ENCODE measurements at regions of chr5 and their contacts with region 1.

Region 1: GRCh38 chr5:40679155-40679913 is 381 bp upstream of the PTGER4 start:
- DNase-seq: peak; percentile 82 to 96 (median 87)
- ATAC-seq: peak; percentile 83
- H3K4me3 ChIP-seq: peak overlapping the region; percentile 77
- H3K4me3 Mint-ChIP-seq: peak overlapping the region; percentile 93 to 100 (median 98)
- H3K27ac ChIP-seq: peak overlapping the region; percentile 99
- H3K27ac Mint-ChIP-seq: peak overlapping the region; percentile 87 to 98 (median 96)
- H3K4me1 ChIP-seq: peaks cover 27 to 38% of the 10 kb centered on the region in 2 donors
- H3K4me1 Mint-ChIP-seq: peaks cover 34 to 63% (median 55%) of the 10 kb centered on the region in 7 donors
- H3K27me3 ChIP-seq: no peaks in the 10 kb centered on the region
- H3K27me3 Mint-ChIP-seq: no peaks in the 10 kb centered on the region

Region 2: DNA sequence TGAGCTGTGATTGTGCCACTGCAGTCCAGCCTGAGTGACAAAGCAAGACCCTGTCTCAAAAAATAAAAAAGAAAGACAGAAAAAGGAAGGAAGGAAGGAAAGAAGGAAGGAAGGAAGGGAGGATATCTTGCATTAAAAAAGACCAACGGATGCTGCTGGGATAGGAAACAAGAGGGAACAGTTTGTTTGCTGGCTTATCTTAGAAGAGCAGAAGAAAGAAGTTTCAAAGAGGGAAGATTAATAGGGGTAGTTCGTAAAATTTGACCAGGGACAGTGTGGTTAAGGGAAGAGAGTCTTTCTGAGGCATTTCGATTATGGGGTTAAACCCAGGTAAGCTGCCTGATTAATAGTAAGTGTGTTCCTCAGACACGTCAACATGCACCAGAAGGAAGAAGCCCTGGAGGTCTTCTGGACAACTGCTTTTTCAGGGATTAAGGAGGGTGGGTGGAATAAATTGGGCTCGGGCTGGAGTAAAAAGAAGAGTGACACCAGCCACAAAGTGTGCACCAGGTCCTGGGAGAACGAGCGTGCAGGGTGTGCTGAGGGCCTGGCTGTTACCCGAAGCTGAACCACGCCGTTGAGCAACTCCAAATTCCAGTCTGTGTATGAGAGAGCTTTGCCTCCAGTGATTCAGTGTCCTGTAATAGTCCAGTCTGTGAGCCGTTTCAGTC is 1484.7 kb before region 1 on chr5:
- CTCF ChIA-PET with region 1: no interaction called
- POLR2A ChIA-PET with region 1: no interaction called
- intact Hi-C with region 1: loop called in 1 of 2 experiments (anchors 5 kb)
- DNase-seq: peak in 1 of 9 donors; percentile 17
- ATAC-seq: no peak
- H3K4me3 ChIP-seq: peak overlapping the region; percentile 46
- H3K4me3 Mint-ChIP-seq: peak overlapping the region; percentile 75 to 98 (median 88)
- H3K27ac ChIP-seq: peak overlapping the region; percentile 83
- H3K27ac Mint-ChIP-seq: peak overlapping the region; percentile 85 to 98 (median 94)
- H3K4me1 ChIP-seq: peaks cover 67 to 69% of the 10 kb centered on the region in 2 donors
- H3K4me1 Mint-ChIP-seq: peaks cover 52 to 78% (median 70%) of the 10 kb centered on the region in 7 donors
- H3K27me3 ChIP-seq: no peaks in the 10 kb centered on the region
- H3K27me3 Mint-ChIP-seq: no peaks in the 10 kb centered on the region

Region 3: DNA sequence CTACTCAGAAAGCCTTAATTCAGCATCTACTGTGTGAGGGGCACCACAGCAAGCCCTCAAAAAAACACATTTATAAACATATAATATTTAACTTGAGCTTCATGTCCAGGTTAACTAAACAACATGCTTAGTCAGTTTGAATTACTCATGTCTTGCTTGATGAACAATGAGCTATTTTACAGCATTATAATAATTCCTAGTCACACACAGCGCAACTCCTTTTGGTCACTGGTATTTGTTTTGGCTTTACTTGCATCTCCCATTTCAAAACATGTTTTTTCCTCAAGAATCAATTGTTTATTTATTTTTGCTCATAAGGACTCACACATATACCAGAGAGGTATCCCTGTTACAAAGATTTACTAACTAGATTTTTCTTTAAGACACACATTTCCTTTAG is 637.9 kb before region 1 on chr5:
- CTCF ChIA-PET with region 1: no interaction called
- POLR2A ChIA-PET with region 1: no interaction called
- intact Hi-C with region 1: no loop called
- DNase-seq: no peak
- ATAC-seq: no peak
- H3K4me3 ChIP-seq: no peak overlapping the region
- H3K4me3 Mint-ChIP-seq: no peak overlapping the region
- H3K27ac ChIP-seq: no peak overlapping the region
- H3K27ac Mint-ChIP-seq: no peak overlapping the region
- H3K4me1 ChIP-seq: no peaks in the 10 kb centered on the region
- H3K4me1 Mint-ChIP-seq: peaks cover 0 to 3% (median 0%) of the 10 kb centered on the region in 7 donors
- H3K27me3 ChIP-seq: no peaks in the 10 kb centered on the region
- H3K27me3 Mint-ChIP-seq: peaks cover 0 to 6% (median 0%) of the 10 kb centered on the region in 5 donors

Region 4: DNA sequence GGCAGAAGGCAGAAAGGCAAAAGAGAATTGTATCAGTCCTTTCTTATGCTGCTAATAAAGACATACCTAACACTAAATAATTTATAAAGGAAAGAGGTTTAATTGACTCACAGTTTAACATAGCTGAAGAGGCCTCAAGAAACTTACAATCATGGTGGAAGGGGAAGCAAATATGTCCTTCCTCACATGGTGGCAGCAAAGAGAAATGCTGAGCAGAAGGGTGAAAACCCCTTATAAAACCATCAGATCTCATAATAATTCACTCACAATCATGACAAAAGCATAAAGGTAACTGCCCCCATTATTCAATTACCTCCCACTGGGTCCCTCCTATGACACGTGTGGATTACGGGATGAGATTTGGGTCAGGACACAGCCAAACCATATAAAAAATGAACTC is 312.1 kb before region 1 on chr5:
- CTCF ChIA-PET with region 1: interaction called, 3 read pairs
- POLR2A ChIA-PET with region 1: no interaction called
- intact Hi-C with region 1: loop called in 1 of 2 experiments (anchors 1 kb)
- DNase-seq: peak in 7 of 9 donors; percentile 18 to 53 (median 38)
- ATAC-seq: peak; percentile 54
- H3K4me3 ChIP-seq: no peak overlapping the region
- H3K4me3 Mint-ChIP-seq: no peak overlapping the region
- H3K27ac ChIP-seq: no peak overlapping the region
- H3K27ac Mint-ChIP-seq: peak overlapping the region in 6 of 9 donors; percentile 19 to 86 (median 66)
- H3K4me1 ChIP-seq: peaks cover 0 to under 1% of the 10 kb centered on the region in 2 donors
- H3K4me1 Mint-ChIP-seq: peaks cover 0 to 17% (median 8%) of the 10 kb centered on the region in 7 donors
- H3K27me3 ChIP-seq: no peaks in the 10 kb centered on the region
- H3K27me3 Mint-ChIP-seq: no peaks in the 10 kb centered on the region

Region 5: GRCh38 chr5:40437452-40437861 is 241.9 kb before region 1 on chr5:
- CTCF ChIA-PET with region 1: interaction called, 4 read pairs
- POLR2A ChIA-PET with region 1: interaction called, 13 read pairs
- intact Hi-C with region 1: loop called (anchors 2 kb)
- DNase-seq: peak in 1 of 9 donors; percentile 7
- ATAC-seq: peak; percentile 67
- H3K4me3 ChIP-seq: peak overlapping the region; percentile 24
- H3K4me3 Mint-ChIP-seq: peak overlapping the region in 6 of 10 donors; percentile 10 to 75 (median 38)
- H3K27ac ChIP-seq: peak overlapping the region; percentile 79
- H3K27ac Mint-ChIP-seq: peak overlapping the region; percentile 71 to 96 (median 91)
- H3K4me1 ChIP-seq: peaks cover 34 to 39% of the 10 kb centered on the region in 2 donors
- H3K4me1 Mint-ChIP-seq: peaks cover 23 to 82% (median 68%) of the 10 kb centered on the region in 7 donors
- H3K27me3 ChIP-seq: no peaks in the 10 kb centered on the region
- H3K27me3 Mint-ChIP-seq: no peaks in the 10 kb centered on the region

Region 6: DNA sequence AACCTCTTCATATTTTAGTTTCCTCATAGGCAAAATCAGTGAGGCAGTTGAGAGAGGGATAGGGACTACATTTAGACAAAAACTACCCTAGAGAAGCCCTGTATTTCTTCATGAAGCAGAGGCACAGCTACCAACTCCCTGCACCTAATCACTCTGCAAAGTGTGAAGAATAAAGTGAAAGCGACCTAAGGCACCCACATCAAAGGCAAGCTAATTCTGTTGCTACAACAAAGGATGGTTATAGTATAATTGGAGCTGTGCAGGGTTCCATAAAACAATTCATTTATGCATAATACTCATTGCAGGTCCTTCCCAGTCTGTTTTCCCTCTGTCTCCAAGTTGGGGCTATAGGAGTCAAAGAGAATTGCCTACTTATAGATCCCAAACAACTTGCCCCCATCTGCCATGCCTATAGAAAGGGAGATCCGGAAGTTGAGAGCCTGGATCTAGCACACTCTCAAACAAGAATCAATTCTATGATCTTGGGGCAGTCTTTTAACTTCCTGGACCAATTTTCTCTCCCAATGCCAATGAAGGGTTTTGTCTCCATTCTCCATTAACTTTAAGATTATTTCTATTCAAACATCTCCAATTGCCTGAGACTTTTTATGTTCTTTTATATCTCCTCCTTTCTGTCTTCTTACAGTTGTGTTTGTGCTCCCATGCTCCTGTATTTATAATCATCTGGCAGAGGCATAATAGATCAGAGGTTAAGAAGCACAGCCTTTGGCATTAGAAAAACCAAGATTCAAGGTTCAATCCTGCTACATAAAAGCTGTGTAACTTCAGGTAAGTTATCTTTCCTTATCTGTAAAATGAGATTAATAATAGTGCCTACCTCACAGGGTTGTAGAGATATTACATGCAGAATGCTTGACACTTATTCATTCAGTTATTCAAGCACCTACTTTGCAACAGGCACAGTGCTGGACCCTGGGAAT is 55.6 kb before region 1 on chr5:
- CTCF ChIA-PET with region 1: interaction called, 5 read pairs
- POLR2A ChIA-PET with region 1: interaction called, 12 read pairs
- intact Hi-C with region 1: loop called (anchors 1 kb)
- DNase-seq: peak in 7 of 9 donors; percentile 49 to 78 (median 68)
- ATAC-seq: peak; percentile 90
- H3K4me3 ChIP-seq: no peak overlapping the region
- H3K4me3 Mint-ChIP-seq: peak overlapping the region; percentile 13 to 73 (median 46)
- H3K27ac ChIP-seq: peak overlapping the region; percentile 50
- H3K27ac Mint-ChIP-seq: peak overlapping the region; percentile 60 to 94 (median 83)
- H3K4me1 ChIP-seq: peaks cover 23 to 25% of the 10 kb centered on the region in 2 donors
- H3K4me1 Mint-ChIP-seq: peaks cover 23 to 68% (median 55%) of the 10 kb centered on the region in 7 donors
- H3K27me3 ChIP-seq: no peaks in the 10 kb centered on the region
- H3K27me3 Mint-ChIP-seq: no peaks in the 10 kb centered on the region

Region 7: GRCh38 chr5:40834849-40835787 is 155.8 kb after region 1 on chr5 and contains the start of gene RPL37:
- CTCF ChIA-PET with region 1: no interaction called
- POLR2A ChIA-PET with region 1: interaction called, 6 read pairs
- intact Hi-C with region 1: loop called (anchors 1 kb)
- DNase-seq: peak; percentile 73 to 91 (median 88)
- ATAC-seq: peak; percentile 96
- H3K4me3 ChIP-seq: peak within 1 kb of the TSS; percentile 88
- H3K4me3 Mint-ChIP-seq: peak within 1 kb of the TSS; percentile 93 to 99 (median 98)
- H3K27ac ChIP-seq: peak within 1 kb of the TSS; percentile 92
- H3K27ac Mint-ChIP-seq: peak within 1 kb of the TSS; percentile 97 to 100 (median 99)
- H3K4me1 ChIP-seq: peaks cover 11 to 23% of the 10 kb centered on the region in 2 donors
- H3K4me1 Mint-ChIP-seq: peaks cover 21 to 58% (median 45%) of the 10 kb centered on the region in 7 donors
- H3K27me3 ChIP-seq: no peaks in the 10 kb centered on the region
- H3K27me3 Mint-ChIP-seq: no peaks in the 10 kb centered on the region
- total RNA-seq, gene RPL37: 1,642 to 2,808 (median 2,710) TPM

Region 8: DNA sequence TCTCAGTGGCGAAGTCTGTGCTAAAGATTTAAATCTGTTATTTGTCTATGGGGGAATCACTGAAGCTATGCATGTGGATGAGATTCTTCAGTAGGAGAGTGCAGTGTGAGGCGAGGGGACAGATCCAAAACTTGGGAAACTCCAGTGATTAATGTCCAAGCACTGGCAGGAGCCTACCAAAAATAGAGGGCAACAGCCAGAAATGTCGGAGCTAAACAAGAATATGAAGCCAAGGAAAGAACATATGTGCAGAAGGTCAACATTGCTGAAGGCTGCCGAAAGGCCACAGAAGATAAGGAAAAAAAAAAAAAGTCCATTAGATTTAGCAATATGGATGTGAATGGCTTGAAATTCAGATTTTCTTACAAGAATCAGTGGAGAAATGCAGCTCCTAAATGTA is 472.2 kb after region 1 on chr5:
- CTCF ChIA-PET with region 1: no interaction called
- POLR2A ChIA-PET with region 1: no interaction called
- intact Hi-C with region 1: no loop called
- DNase-seq: no peak
- ATAC-seq: no peak
- H3K4me3 ChIP-seq: no peak overlapping the region
- H3K4me3 Mint-ChIP-seq: no peak overlapping the region
- H3K27ac ChIP-seq: no peak overlapping the region
- H3K27ac Mint-ChIP-seq: no peak overlapping the region
- H3K4me1 ChIP-seq: no peaks in the 10 kb centered on the region
- H3K4me1 Mint-ChIP-seq: no peaks in the 10 kb centered on the region
- H3K27me3 ChIP-seq: no peaks in the 10 kb centered on the region
- H3K27me3 Mint-ChIP-seq: peaks cover 0 to 6% (median 0%) of the 10 kb centered on the region in 5 donors